MCF 10A (cell line): ENCODE measurements at regions of chr5 and their contacts with region 1.

Region 1: DNA sequence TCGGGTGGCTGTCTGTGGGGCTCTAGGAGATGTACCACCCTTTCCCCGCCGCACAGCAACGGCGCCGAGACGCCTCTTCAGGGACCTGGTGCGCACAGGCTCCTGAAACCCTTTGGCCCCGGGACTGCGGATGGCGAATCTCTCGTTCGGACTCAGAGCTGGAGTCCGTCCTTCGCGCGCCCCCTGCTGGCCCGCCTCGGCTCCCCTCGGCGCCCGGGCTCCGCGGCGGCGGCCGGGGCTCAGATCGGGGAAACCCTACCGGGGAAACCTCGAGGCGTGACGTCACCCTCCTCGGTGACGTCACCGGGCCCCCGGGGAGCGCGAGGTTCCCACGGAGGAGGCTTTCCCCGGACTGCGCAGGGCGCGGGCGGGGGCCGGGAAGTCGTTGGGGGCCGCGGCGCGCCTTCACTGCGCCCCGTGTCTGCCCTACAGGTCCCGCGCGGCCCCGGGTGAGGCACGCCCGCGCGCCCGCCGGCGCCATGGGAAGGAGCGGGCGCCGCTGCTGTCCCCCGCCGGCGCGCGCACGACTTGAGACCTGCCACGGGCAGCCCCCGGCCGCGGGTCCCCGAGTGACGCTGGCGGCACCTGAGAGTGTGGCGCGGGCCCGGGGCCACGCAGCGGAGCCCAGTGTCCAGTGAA is 7.9 kb downstream of the PRR7 start:
- DNase-seq: peak; percentile 93
- H3K4me3 Mint-ChIP-seq: peak overlapping the region; percentile 70
- H3K27ac Mint-ChIP-seq: no peak overlapping the region
- H3K4me1 Mint-ChIP-seq: peaks cover 6% of the 10 kb centered on the region
- H3K27me3 Mint-ChIP-seq: no peaks in the 10 kb centered on the region
- CTCF ChIP-seq: peak; percentile 98

Region 2: GRCh38 chr5:177311723-177312648 is 142.5 kb before region 1 on chr5 and contains the start of gene MXD3:
- CTCF ChIA-PET with region 1: interaction called, 33 read pairs
- POLR2A ChIA-PET with region 1: interaction called, 5 read pairs
- intact Hi-C with region 1: loop called (anchors 2 kb)
- DNase-seq: peak; percentile 99
- H3K4me3 Mint-ChIP-seq: peak within 1 kb of the TSS; percentile 66
- H3K27ac Mint-ChIP-seq: peak within 1 kb of the TSS; percentile 51
- H3K4me1 Mint-ChIP-seq: peaks cover 29% of the 10 kb centered on the region
- H3K27me3 Mint-ChIP-seq: no peaks in the 10 kb centered on the region
- CTCF ChIP-seq: no peak
- total RNA-seq, gene MXD3: 8.4 and 13.2 TPM in 2 replicates

Region 3: DNA sequence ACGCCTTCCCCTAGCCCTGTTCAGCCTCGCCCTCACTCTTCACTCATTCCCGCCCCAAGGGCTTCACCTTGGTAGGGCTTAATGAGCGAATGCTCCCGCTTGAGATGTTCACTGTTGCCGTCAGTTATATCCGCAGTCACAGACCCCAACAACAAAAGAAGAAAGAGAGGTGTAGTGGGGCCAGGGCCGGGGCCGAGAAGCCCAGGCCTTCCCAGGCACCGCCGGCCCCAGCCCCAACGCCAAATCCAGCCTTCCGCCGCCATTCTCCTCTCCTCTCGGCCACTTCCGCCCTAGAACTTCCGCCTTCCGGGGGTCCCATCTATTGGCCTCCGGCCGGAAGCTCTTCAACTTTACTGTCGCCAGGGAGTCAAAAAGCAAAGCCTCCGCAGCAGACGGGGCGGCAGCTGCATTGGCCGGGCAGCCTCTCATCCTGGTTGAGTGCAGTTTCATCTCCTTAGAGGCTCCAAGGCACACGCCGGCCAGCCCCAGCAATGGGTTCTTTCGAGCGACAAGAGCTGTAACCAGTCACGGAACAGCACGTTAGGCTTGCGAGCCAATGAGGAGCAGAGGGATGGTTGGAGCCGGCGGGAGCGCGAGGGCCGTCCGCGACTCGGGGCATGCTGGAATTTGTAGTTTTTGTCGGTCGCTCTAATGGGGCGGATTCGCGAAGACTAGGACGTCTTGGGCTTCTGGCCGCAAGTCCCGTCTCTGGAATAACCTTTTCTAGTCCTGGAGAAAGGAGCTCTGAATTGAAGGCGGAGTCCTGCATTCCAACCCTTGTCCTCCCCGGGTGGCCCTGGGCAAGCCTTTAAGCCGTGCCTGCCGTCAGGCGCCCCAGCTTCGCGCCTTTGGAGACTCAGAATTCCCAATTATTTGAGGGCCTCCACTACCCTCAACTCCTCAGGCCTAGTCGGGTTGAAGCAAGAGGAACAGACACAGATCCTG is 102.9 kb before region 1 on chr5 and contains the start of gene LMAN2:
- CTCF ChIA-PET with region 1: interaction called, 9 read pairs
- POLR2A ChIA-PET with region 1: interaction called, 13 read pairs
- intact Hi-C with region 1: no loop called
- DNase-seq: peak; percentile 99
- H3K4me3 Mint-ChIP-seq: peak within 1 kb of the TSS; percentile 93
- H3K27ac Mint-ChIP-seq: peak within 1 kb of the TSS; percentile 98
- H3K4me1 Mint-ChIP-seq: peaks cover 24% of the 10 kb centered on the region
- H3K27me3 Mint-ChIP-seq: no peaks in the 10 kb centered on the region
- CTCF ChIP-seq: no peak
- total RNA-seq, gene LMAN2: 221 and 279 TPM in 2 replicates

Region 4: GRCh38 chr5:177425801-177426565 is 28.5 kb before region 1 on chr5:
- CTCF ChIA-PET with region 1: interaction called, 17 read pairs
- POLR2A ChIA-PET with region 1: interaction called, 217 read pairs
- intact Hi-C with region 1: loop called (anchors 1 kb)
- DNase-seq: peak; percentile 100
- H3K4me3 Mint-ChIP-seq: peak overlapping the region; percentile 89
- H3K27ac Mint-ChIP-seq: peak overlapping the region; percentile 99
- H3K4me1 Mint-ChIP-seq: peaks cover 22% of the 10 kb centered on the region
- H3K27me3 Mint-ChIP-seq: no peaks in the 10 kb centered on the region
- CTCF ChIP-seq: no peak

Region 5: DNA sequence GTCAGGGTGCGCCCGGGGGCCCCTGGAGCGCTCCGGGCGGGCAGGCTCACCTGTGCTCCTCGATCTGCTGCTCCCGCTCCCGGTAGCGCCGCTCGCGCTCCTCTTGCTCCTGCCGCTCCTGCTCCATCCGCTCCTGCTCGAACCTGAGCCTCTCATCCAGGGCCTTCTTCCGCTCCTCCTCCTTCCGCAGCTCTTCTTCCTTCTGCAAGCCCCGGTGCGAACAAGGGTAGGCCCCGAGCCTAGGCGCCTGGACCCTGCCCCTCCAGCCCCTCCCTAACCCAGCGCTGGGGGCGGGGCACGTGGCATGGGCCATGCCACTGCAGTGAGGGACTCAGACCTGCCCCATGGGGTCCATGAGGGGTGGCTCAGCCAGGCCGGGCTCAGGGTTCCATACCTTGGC is 12.3 kb after region 1 on chr5:
- CTCF ChIA-PET with region 1: interaction called, 39 read pairs
- POLR2A ChIA-PET with region 1: interaction called, 3 read pairs
- intact Hi-C with region 1: no loop called
- DNase-seq: no peak
- H3K4me3 Mint-ChIP-seq: no peak overlapping the region
- H3K27ac Mint-ChIP-seq: no peak overlapping the region
- H3K4me1 Mint-ChIP-seq: peaks cover 31% of the 10 kb centered on the region
- H3K27me3 Mint-ChIP-seq: no peaks in the 10 kb centered on the region
- CTCF ChIP-seq: no peak

Region 6: DNA sequence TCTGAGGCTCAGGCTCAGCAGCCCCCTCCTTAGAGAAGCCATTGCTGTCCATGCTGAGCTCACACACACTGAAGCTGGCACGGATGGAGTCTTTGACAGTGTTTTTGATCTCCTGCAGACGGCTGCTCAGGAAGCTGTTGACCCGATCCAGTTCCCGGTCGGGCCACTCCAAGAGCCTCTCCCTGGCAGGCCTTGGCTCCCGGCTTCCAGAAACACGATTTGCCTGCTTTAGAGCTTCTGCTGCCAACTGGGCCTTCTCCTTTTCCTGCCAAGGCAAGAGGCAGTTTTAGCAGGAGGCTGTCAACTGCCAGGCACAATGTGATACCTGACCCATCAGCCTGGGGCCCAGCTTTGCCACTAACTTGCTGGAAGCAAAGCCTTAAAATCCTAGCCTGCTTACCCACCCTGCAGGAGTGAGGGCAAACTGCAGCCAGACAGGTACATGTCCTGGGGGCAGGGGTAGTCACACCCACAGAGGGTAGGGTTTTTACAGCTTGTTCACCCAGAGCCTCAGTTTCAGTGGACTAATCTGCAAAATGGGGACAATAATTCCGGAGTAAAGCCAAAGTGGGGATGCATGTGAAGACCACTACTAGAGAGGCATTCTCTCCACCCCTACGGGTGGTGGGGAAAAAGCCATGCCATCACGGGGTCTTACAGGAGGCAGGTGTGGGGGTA is 70.6 kb after region 1 on chr5:
- CTCF ChIA-PET with region 1: no interaction called
- POLR2A ChIA-PET with region 1: no interaction called
- intact Hi-C with region 1: no loop called
- DNase-seq: no peak
- H3K4me3 Mint-ChIP-seq: no peak overlapping the region
- H3K27ac Mint-ChIP-seq: no peak overlapping the region
- H3K4me1 Mint-ChIP-seq: peaks cover 7% of the 10 kb centered on the region
- H3K27me3 Mint-ChIP-seq: no peaks in the 10 kb centered on the region
- CTCF ChIP-seq: no peak